PC-9 (cell line): ENCODE measurements at regions of chr13 and their contacts with region 1.

Region 1: GRCh38 chr13:50911937-50912795 is 2.6 kb downstream of the RNASEH2B start:
- DNase-seq: peak; percentile 64 to 75
- H3K4me3 ChIP-seq: peak overlapping the region; percentile 96; the same call in 1 of the 2 replicates
- H3K27ac ChIP-seq: no peak overlapping the region
- H3K4me1 ChIP-seq: peaks cover 17% of the 10 kb centered on the region
- H3K27me3 ChIP-seq: no peaks in the 10 kb centered on the region
- CTCF ChIP-seq: peak; percentile 92

Region 2: GRCh38 chr13:49292742-49293486 is 1619.3 kb before region 1 on chr13:
- CTCF ChIA-PET with region 1: no interaction called
- POLR2A ChIA-PET with region 1: no interaction called
- intact Hi-C with region 1: loop called (anchors 10 kb)
- DNase-seq: no peak
- H3K4me3 ChIP-seq: no peak overlapping the region
- H3K27ac ChIP-seq: no peak overlapping the region
- H3K4me1 ChIP-seq: no peaks in the 10 kb centered on the region
- H3K27me3 ChIP-seq: no peaks in the 10 kb centered on the region
- CTCF ChIP-seq: no peak

Region 3: DNA sequence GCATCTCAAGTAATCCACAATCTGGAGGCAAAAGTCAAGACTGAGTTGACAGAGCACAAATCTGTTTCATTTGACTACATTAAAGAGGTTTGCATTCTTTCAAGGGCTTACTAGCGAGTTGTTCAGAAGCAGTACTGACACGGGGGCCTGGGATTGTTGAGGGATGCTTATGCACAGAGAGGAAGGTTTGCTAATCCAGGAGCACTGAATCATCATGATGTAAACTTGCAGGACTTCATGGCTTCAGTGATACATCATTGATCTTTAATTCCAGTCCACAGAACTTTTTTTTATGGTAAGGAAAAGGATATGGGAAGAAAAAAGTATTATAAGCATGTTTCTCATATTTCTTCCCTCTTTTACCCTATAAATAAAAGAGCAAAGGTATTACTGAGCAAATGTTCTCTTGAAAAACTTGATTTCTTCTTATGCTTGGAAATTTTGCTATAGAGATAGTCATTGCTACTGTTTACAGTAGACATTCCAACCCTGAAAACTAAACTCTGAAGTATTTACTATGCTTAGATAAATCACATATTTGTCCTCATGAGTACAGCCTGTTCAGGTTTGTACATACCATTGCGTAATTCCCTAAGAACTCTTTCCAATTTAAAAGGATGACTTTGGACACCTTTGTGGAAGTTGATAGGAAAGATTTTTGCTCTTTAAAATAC is 1053.8 kb before region 1 on chr13:
- CTCF ChIA-PET with region 1: no interaction called
- POLR2A ChIA-PET with region 1: no interaction called
- intact Hi-C with region 1: loop called (anchors 5 kb)
- DNase-seq: peak; percentile 61 to 96
- H3K4me3 ChIP-seq: peak overlapping the region; percentile 55
- H3K27ac ChIP-seq: peak overlapping the region; percentile 98
- H3K4me1 ChIP-seq: peaks cover 33% of the 10 kb centered on the region
- H3K27me3 ChIP-seq: no peaks in the 10 kb centered on the region
- CTCF ChIP-seq: no peak

Region 4: DNA sequence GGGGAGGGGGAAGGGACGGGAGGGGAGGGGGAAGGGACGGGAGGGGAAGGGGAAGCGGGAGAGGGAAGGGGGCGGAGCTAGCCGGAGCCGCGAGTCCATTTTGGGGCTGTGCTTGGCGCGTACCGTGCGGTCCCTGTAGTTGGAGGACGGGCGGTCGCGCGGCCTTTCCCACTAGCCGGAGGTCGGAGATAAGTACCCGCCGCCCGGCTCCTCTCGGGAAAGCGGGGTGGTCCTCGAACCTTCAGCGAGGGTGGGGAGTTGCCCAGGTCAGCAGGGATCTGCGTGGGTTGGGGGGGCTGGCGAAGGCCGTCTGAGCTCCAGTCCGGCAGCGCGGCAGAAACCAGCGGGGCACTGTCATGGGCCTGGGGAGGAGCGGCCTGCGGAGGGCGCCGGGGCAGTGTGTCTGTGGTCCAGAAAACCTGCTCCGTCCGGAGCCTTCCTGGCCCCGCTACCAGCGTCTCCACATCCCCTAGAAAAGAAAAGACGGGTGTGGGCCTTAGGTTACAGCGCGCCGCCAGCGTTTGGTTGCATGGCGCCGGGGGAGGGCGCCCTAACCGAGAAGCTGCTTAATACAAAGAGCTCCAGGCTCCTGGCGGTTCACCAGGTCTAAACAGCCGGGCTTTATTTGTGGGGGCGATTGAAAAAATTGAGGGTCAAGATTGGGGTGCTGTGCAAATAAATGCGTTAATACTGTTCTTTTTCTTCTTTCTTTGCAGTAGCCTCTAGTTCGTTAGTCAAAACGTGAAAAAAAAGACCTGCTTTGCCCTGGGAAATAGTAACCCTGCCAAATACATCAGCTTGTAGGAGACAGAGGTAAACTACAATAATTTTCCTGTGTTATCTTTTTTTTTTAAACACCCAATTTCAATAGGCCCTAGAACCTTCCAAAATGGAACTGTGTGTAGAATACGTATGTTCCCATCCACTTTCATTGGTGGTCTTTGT is 914.9 kb before region 1 on chr13 and contains the start of gene TRIM13:
- CTCF ChIA-PET with region 1: interaction called, 13 read pairs
- POLR2A ChIA-PET with region 1: no interaction called
- intact Hi-C with region 1: loop called (anchors 5 kb)
- DNase-seq: peak; percentile 73 to 83
- H3K4me3 ChIP-seq: peak within 1 kb of the TSS; percentile 98
- H3K27ac ChIP-seq: peak within 1 kb of the TSS; percentile 93
- H3K4me1 ChIP-seq: peaks cover 13% of the 10 kb centered on the region
- H3K27me3 ChIP-seq: no peaks in the 10 kb centered on the region
- CTCF ChIP-seq: peak; percentile 78
- total RNA-seq, gene TRIM13: 13.4 and 15.1 TPM in 2 replicates

Region 5: GRCh38 chr13:50561739-50562138 is 350.4 kb before region 1 on chr13:
- CTCF ChIA-PET with region 1: no interaction called
- POLR2A ChIA-PET with region 1: no interaction called
- intact Hi-C with region 1: no loop called
- DNase-seq: no peak
- H3K4me3 ChIP-seq: no peak overlapping the region
- H3K27ac ChIP-seq: no peak overlapping the region
- H3K4me1 ChIP-seq: no peaks in the 10 kb centered on the region
- H3K27me3 ChIP-seq: no peaks in the 10 kb centered on the region
- CTCF ChIP-seq: no peak

Region 6: GRCh38 chr13:50691176-50691680 is 220.9 kb before region 1 on chr13:
- CTCF ChIA-PET with region 1: interaction called, 10 read pairs
- POLR2A ChIA-PET with region 1: no interaction called
- intact Hi-C with region 1: no loop called
- DNase-seq: no peak
- H3K4me3 ChIP-seq: no peak overlapping the region
- H3K27ac ChIP-seq: no peak overlapping the region
- H3K4me1 ChIP-seq: no peaks in the 10 kb centered on the region
- H3K27me3 ChIP-seq: no peaks in the 10 kb centered on the region
- CTCF ChIP-seq: no peak

Region 7: DNA sequence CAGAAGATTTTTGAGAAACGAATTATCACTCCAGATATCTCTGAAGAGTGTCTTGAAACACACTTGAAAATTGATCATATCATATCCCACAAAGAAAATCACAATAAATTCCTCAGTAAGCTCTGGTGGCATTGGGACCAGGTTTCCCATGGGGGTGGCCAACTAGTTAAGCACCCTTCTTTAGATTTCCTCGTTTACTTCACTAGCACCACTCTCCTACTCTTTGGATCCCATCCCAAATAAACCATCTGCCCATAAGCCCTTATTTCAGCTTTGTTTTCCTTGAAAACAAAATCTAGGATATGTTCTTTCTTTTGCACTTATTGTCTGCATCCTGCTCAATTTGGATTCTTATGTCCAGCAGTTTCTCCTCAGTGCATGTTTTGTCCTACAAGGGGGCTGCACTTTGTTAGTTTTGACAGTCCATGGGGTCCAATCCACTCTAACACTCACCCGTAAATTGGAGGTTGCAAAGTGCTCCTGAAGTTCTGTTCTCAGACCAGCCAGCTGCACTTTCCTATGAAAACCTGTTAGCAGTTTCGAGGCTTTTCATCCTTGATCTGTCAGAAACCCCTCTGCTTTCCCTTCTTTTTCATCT is 269.7 kb after region 1 on chr13:
- CTCF ChIA-PET with region 1: no interaction called
- POLR2A ChIA-PET with region 1: no interaction called
- intact Hi-C with region 1: no loop called
- DNase-seq: no peak
- H3K4me3 ChIP-seq: no peak overlapping the region
- H3K27ac ChIP-seq: no peak overlapping the region
- H3K4me1 ChIP-seq: no peaks in the 10 kb centered on the region
- H3K27me3 ChIP-seq: peaks cover 67% of the 10 kb centered on the region
- CTCF ChIP-seq: no peak